ENCODE measurements at regions of chr10 and their contacts with region 1.

Region 1: GRCh38 chr10:86971232-86971991 is 3.1 kb downstream of the ADIRF start:
- DNase-seq: peak; percentile 76
- H3K4me3 Mint-ChIP-seq: peak overlapping the region; percentile 74
- H3K27ac Mint-ChIP-seq: peak overlapping the region; percentile 33
- H3K4me1 Mint-ChIP-seq: peaks cover 13% of the 10 kb centered on the region
- H3K27me3 Mint-ChIP-seq: peaks cover 32% of the 10 kb centered on the region

Region 2: GRCh38 chr10:87504640-87505365 is 533.4 kb after region 1 on chr10 and contains the start of gene MINPP1:
- intact Hi-C with region 1: loop called (anchors 10 kb)
- DNase-seq: peak; percentile 60
- H3K4me3 Mint-ChIP-seq: peak within 1 kb of the TSS; percentile 83
- H3K27ac Mint-ChIP-seq: peak within 1 kb of the TSS; percentile 80
- H3K4me1 Mint-ChIP-seq: peaks cover 27% of the 10 kb centered on the region
- H3K27me3 Mint-ChIP-seq: peaks cover 15% of the 10 kb centered on the region
- total RNA-seq, gene MINPP1: 13.4 and 14.1 TPM in 2 replicates